Cardiac septum (tissue), 1 donor: ENCODE measurements at regions of chr3 and their contacts with region 1.

Region 1: GRCh38 chr3:52685709-52686691 is at the starts of genes GNL3 and PBRM1:
- DNase-seq: peak; percentile 96
- total RNA-seq, gene GNL3: 29.1 TPM
- total RNA-seq, gene PBRM1: 50.2 TPM

Region 2: GRCh38 chr3:52333869-52334557 is 352.0 kb before region 1 on chr3:
- intact Hi-C with region 1: no loop called
- DNase-seq: no peak

Region 3: DNA sequence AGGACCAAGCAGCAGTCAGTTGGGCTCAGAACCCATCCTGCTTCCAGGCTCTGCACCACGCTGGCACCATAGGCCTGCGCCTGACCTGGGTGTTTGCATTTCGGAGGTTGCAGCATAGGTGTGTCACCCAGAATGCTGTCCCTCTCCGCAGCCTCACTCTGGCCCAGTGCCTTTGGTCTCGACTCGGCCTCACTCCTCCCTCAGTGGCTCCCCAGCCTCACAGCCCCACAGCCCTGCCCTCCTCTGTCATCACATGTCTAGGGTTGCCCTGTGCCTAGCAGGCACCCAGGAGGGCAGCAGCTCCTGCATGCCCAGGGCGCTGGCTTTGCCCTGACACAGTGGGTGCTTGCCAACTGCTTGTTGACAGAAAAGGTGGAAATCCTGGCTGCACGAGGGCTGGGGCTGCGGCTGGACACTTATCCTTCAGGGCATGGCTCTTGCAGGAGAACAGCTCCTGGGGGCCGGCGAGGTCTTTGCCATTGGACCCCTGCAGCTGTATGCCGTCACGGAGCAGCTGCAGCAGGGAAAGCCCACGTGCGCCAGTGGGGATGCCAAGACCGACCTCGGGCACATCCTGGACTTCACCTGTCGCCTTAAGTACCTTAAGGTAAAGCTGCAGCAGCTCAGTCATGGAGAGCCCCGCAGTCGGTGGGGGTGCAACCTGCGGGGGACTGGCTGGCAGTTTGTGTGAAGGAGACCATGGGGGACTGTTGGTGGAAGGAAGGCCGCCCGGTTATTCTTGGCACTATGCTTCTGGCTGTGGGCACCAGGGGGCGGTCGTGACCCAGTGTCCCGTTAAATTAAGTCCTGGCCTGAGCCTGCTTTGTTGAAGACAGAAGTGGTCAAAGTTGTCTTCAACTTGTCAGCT is 214.4 kb before region 1 on chr3:
- intact Hi-C with region 1: loop called (anchors 5 kb)
- DNase-seq: no peak

Region 4: GRCh38 chr3:52705688-52706686 is 20.0 kb after region 1 on chr3 and contains the starts of genes GLT8D1 and SPCS1:
- intact Hi-C with region 1: loop called (anchors 2 kb)
- DNase-seq: peak; percentile 93
- total RNA-seq, gene GLT8D1: 29.1 TPM
- total RNA-seq, gene SPCS1: 79.4 TPM

Region 5: GRCh38 chr3:52730681-52731080 is 44.7 kb after region 1 on chr3:
- intact Hi-C with region 1: no loop called
- DNase-seq: no peak